ENCODE measurements at regions of chr9 and their contacts with region 1.

Region 1: GRCh38 chr9:35690431-35691333 is 957 bp upstream of the TPM2 start:
- DNase-seq: peak; percentile 89
- ATAC-seq: peak; percentile 70

Region 2: DNA sequence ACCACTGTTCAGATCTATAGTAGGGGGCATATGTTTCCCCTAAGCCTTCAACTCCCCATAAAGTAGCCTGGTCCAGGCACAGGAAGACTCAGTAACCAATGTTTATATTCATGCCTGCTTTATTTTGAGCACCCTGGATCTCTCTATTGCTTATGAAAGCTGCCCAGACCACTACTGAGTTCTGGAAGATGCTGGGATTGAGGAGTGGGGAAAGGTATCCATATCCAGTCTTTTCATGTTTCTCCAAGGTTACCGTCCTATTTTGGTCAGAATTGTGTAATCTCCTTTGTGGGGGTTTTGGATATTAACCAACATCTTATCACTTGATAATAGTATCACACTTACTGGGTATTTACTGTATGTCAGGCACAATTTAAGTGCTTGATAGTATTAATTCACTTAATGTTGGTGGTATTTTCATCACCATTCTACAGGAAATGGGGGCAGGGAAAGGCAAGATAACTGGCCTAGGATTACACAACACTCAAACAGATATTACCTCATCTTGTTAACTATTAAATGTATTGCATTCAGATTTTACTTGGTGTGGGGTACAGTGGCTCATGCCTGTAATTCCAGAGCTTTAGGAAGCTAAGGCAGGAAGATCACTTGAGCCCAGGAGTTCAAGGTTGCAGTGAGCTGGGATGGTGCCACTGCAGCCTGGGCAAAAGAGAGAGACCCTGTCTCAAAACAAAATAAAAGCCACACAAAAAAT is 164.4 kb before region 1 on chr9:
- intact Hi-C with region 1: no loop called
- DNase-seq: no peak
- ATAC-seq: peak; percentile 65

Region 3: GRCh38 chr9:35636135-35636876 is 54.4 kb before region 1 on chr9:
- intact Hi-C with region 1: no loop called
- DNase-seq: no peak
- ATAC-seq: peak; percentile 38

Region 4: DNA sequence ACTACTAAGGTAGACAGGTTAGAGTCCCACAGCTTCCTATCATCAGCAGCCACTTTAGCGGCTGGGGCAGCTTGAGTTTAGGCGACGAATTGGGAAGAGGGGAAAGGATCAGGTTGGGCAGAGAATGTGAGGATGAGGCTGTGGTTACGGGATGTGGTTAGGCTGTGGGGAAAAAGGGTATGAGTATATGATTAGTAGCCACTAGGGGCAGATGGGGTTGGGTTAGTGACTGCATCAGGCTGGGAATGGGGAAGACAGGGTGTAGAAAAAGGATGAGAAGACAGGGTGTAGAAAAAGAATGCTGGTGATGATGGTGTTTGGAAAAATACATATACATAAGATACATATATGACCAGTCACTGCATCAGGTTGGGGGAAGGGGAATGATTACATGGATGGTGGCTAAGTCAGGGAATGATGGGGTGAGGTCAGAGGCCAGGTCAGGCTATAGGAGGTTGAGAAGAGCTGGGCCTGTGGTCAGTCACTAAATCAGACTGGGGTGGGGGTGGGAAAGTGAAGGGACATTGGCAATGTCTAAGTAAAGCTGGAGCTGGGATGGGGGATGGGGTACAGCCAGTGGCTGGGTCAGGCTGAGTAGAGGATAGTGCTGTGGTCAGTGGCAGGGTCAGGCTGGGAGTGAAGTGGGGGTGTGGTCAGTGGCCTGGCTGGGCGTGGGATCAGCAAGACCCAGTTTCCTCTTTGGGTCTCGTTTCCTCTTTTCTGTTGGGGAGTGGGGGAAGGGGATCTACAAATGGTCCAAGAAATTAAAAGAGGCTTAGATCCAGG is 39.2 kb after region 1 on chr9:
- intact Hi-C with region 1: loop called (anchors 5 kb)
- DNase-seq: peak; percentile 80
- ATAC-seq: no peak

Measured in Right ventricle myocardium superior (tissue), 1 donor.